Colonic mucosa (tissue), 4 donors: ENCODE measurements at regions of chr3 and their contacts with region 1.

Region 1: DNA sequence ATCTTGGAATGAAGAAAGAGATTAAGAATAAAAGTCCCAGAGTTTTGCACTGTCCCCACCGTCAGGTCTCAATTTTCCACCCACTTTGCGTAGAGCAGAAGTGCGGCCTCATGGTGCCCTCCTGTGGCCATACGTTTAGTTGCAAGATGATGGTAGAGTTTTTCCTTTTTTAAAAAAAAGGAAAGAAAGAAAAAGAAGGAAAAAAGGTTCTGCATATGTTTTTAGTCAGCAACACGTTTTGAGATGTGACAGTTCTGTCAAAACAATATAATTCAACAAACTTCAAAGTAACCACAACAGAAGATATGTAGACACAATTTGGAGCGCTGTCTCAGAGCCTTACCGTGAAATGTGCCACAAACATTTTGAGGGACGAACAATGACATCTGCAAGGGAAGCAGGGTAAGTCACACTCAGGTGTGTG is 24.6 kb downstream of the EBLN2 start:
- DNase-seq: peak; percentile 46
- H3K4me3 ChIP-seq: no peak overlapping the region
- H3K27ac ChIP-seq: no peak overlapping the region
- H3K4me1 ChIP-seq: no peaks in the 10 kb centered on the region
- H3K27me3 ChIP-seq: no peaks in the 10 kb centered on the region
- CTCF ChIP-seq: peak; percentile 71

Region 2: GRCh38 chr3:72847751-72848702 is 238.1 kb before region 1 on chr3 and contains the start of gene SHQ1:
- intact Hi-C with region 1: loop called (anchors 5 kb)
- DNase-seq: peak; percentile 99
- H3K4me3 ChIP-seq: peak within 1 kb of the TSS; percentile 74
- H3K27ac ChIP-seq: peak within 1 kb of the TSS; percentile 11
- H3K4me1 ChIP-seq: peaks cover 7% of the 10 kb centered on the region
- H3K27me3 ChIP-seq: no peaks in the 10 kb centered on the region
- CTCF ChIP-seq: no peak
- total RNA-seq, gene SHQ1: 10.9 to 25.0 TPM

Region 3: DNA sequence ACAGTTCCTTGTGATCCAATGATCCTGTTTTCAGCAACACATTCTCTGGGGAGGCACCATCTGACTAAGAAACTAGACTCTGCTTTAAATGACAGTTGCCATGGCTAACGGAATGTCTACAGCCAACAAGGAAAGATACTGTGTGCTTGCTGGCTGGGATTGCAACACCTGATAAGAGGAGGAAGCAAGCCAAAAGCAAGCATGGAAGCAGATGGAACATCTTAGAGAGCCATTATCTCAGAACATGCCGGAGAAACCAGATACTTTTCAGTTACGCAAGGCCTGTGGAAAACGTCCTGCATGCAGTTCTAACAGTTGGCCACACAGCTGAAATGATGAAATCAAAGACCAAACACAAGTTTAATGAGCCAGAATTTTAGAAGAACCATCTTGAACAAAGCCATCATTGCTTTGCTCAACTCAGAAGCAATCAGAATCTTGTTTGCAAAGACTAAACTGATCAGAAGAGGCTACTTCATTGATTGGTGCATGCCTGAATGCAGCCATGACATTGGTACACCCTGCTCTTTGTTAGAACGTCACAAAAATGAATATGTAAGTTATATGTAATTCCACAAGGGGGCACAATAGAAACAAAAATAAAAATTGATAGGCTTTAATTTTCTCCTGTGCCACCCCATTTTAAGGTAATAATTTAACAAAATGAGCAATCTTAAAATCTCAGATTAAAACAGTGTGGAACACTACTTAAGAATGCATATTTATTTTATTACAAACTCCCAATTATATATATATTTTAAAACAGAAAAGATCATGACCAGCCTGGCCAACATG is 147.4 kb before region 1 on chr3:
- intact Hi-C with region 1: no loop called
- DNase-seq: peak; percentile 44
- H3K4me3 ChIP-seq: no peak overlapping the region
- H3K27ac ChIP-seq: no peak overlapping the region
- H3K4me1 ChIP-seq: no peaks in the 10 kb centered on the region
- H3K27me3 ChIP-seq: no peaks in the 10 kb centered on the region
- CTCF ChIP-seq: peak; percentile 53